ENCODE measurements at regions of chr14 and their contacts with region 1.

Region 1: DNA sequence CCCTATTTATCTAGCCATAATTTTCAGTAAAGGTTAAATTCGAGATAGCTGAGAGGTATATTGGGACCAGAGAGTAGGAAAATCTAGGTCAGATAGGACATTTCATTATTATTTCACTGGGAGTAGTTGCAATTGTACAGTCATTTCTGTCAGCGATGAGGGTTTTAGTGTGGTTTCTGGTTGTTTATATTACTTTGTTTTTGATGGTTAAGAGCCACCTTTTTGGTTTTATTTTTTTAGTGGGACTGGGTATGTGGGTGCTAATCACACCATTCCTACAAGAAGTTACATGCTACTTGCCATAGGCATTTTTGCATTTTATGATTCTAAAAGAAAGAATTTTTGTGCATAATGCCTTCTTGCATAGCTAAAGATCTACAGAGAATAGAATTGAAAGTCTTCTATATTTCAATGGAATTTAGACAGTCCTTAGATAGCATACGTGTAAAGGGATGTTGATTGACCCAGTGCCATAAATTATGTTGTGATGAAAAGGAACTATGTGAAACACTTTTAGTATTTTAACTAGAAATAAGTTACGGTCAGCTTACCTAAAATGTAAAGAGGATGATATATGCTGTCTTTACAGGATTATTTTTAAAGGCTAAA is 85.2 kb downstream of the KTN1 start:
- DNase-seq: no peak
- ATAC-seq: no peak
- H3K4me3 ChIP-seq: no peak overlapping the region
- H3K27ac ChIP-seq: no peak overlapping the region
- H3K4me1 ChIP-seq: peaks cover 34% of the 10 kb centered on the region
- H3K27me3 ChIP-seq: no peaks in the 10 kb centered on the region
- CTCF ChIP-seq: no peak

Region 2: DNA sequence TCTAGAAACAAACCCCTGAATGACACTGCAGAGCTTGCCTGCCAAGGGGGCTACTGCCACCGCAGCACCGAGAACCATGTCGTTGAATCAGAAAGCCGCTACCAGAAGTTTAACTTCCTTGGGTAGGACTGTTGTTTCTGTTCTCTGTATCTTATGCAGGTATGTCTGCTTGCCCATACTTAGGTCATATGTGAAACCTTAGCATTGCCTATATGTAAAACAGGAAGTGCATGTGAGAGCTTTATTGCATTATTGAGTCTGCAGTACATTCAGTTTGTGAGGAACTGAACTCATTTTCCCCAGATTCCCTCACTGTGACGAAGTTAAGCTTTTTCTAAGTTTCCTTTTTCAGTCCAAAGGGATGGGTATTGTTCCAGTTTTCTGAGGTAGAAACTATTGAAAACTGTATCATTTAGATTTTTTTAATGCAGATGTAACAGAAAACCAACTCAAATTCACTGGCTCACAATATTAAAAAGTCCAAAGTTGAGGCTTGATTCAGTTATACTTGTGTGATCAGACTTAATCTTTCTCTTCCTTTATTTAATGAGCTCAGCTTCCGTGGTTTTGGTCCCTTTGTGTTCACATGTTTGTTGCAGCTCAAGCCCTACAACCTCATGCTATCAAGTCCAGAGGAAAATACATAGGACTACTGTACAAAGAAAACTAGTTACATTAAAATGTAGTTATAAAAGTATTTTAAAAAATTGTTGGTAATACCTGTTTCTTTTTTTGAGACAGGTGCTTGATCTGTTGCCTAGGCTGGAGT is 387.0 kb before region 1 on chr14:
- intact Hi-C with region 1: no loop called
- DNase-seq: no peak
- ATAC-seq: no peak
- H3K4me3 ChIP-seq: no peak overlapping the region
- H3K27ac ChIP-seq: peak overlapping the region; percentile 54
- H3K4me1 ChIP-seq: peaks cover 52% of the 10 kb centered on the region
- H3K27me3 ChIP-seq: no peaks in the 10 kb centered on the region
- CTCF ChIP-seq: no peak

Region 3: DNA sequence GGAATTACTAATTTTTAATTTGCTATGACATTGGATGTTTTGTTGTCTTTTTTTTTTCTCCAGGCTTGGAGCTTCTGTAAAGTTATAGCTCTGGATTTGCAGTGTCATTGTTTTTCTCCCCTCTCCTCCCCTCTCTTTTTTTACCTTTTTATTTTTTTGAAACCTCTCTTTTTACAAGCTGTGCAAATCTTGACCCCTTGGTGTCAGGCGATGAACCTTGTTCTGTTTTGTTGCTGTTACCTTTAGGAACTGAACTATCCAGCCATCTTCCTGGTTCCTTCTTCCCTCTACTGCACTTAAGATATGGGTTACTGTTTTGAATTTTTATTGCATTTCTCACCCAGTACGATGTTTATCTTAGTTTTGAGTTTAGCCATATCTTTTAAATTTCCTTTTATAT is 71.5 kb before region 1 on chr14:
- intact Hi-C with region 1: loop called (anchors 5 to 10 kb)
- DNase-seq: no peak
- ATAC-seq: no peak
- H3K4me3 ChIP-seq: no peak overlapping the region
- H3K27ac ChIP-seq: peak overlapping the region; percentile 19
- H3K4me1 ChIP-seq: peaks cover 62% of the 10 kb centered on the region
- H3K27me3 ChIP-seq: no peaks in the 10 kb centered on the region
- CTCF ChIP-seq: no peak

Region 4: GRCh38 chr14:55611859-55612258 is 53.3 kb before region 1 on chr14:
- intact Hi-C with region 1: loop called in 1 of 2 experiments (anchors 2 kb)
- DNase-seq: no peak
- ATAC-seq: no peak
- H3K4me3 ChIP-seq: no peak overlapping the region
- H3K27ac ChIP-seq: peak overlapping the region; percentile 61
- H3K4me1 ChIP-seq: peaks cover 75% of the 10 kb centered on the region
- H3K27me3 ChIP-seq: no peaks in the 10 kb centered on the region
- CTCF ChIP-seq: no peak

Region 5: GRCh38 chr14:55681088-55681487 is 15.9 kb after region 1 on chr14:
- intact Hi-C with region 1: no loop called
- DNase-seq: no peak
- ATAC-seq: no peak
- H3K4me3 ChIP-seq: no peak overlapping the region
- H3K27ac ChIP-seq: peak overlapping the region; percentile 86
- H3K4me1 ChIP-seq: peaks cover 15% of the 10 kb centered on the region
- H3K27me3 ChIP-seq: no peaks in the 10 kb centered on the region
- CTCF ChIP-seq: no peak

Measured in psoas muscle (tissue), 8 donors.